HepG2 (cell line): ENCODE measurements at regions of chr15 and their contacts with region 1.

Region 1: GRCh38 chr15:89874926-89875564 is 18.7 kb downstream of the AP3S2 start:
- DNase-seq: peak; percentile 46
- ATAC-seq: peak; percentile 98
- H3K4me3 ChIP-seq: no peak overlapping the region
- H3K27ac ChIP-seq: no peak overlapping the region
- H3K4me1 ChIP-seq: peaks cover 6% of the 10 kb centered on the region; the same call in 1 of the 2 replicates
- H3K27me3 ChIP-seq: no peaks in the 10 kb centered on the region
- CTCF ChIP-seq: peak; percentile 91
- EP300 ChIP-seq: no peak
- POLR2A ChIP-seq: no peak
- RAD21 ChIP-seq: peak; percentile 92

Region 2: DNA sequence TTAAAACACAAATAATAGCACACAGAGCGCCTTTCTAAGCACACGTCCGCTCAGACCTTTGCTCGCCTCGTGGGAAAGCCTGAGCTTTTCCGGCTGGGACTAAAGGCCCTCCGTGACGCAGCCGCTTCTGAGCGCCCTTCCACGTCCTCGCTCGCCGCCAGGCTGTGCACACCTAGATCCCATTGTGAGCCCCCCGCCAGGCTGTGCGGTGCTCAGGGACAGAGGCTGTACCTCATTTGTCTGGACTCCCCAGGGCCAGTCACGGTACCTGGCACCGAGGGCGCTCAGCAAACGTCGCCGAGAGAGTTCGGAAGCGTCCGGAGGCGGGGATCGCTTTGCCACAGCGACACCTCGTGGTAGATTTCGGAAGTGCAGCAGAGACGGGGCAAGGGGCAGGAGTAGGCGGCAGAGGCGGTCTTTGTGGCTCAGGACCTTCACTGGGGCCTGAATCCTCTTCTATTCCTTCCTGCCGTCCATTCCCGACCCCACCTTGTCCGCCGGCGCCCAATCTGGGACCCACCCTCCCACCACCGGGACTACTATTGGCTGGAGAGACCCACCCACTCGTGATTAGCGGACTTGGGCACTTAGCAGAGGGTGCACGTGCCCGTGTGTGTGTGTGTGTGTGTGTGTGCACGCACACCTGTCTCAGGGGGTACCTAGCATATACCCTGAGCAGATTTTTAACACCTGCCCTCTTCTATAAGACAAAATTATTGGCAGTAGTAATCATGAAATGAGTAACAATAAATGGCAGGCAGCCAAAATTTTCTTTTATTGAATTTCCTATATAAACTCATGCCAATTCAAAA is 444.3 kb before region 1 on chr15:
- CTCF ChIA-PET with region 1: no interaction called
- POLR2A ChIA-PET with region 1: no interaction called
- in situ Hi-C with region 1: no loop called
- intact Hi-C with region 1: no loop called
- DNase-seq: peak; percentile 49
- ATAC-seq: peak; percentile 96
- H3K4me3 ChIP-seq: peak overlapping the region; percentile 32 to 73 (median 49); a peak in 5 of 6 replicates
- H3K27ac ChIP-seq: no peak overlapping the region
- H3K4me1 ChIP-seq: peaks cover 8% of the 10 kb centered on the region; the same call in 1 of the 2 replicates
- H3K27me3 ChIP-seq: peaks cover 0 to 16% of the 10 kb centered on the region in 2 experiments; a peak in 1 of 5 replicates
- CTCF ChIP-seq: peak; percentile 99
- EP300 ChIP-seq: no peak
- POLR2A ChIP-seq: no peak
- RAD21 ChIP-seq: peak; percentile 88

Region 3: GRCh38 chr15:89740137-89740536 is 134.9 kb before region 1 on chr15:
- CTCF ChIA-PET with region 1: interaction called, 16 read pairs
- POLR2A ChIA-PET with region 1: no interaction called
- in situ Hi-C with region 1: no loop called
- intact Hi-C with region 1: loop called (anchors 1 kb)
- DNase-seq: peak; percentile 72
- ATAC-seq: peak; percentile 88
- H3K4me3 ChIP-seq: no peak overlapping the region
- H3K27ac ChIP-seq: no peak overlapping the region
- H3K4me1 ChIP-seq: no peaks in the 10 kb centered on the region
- H3K27me3 ChIP-seq: peaks cover 2 to 39% of the 10 kb centered on the region in 2 experiments; a peak in 4 of 5 replicates
- CTCF ChIP-seq: peak; percentile 92
- EP300 ChIP-seq: no peak
- POLR2A ChIP-seq: no peak
- RAD21 ChIP-seq: peak; percentile 84

Region 4: GRCh38 chr15:89754361-89755140 is 120.5 kb before region 1 on chr15:
- CTCF ChIA-PET with region 1: interaction called, 4 read pairs
- POLR2A ChIA-PET with region 1: no interaction called
- in situ Hi-C with region 1: loop called (anchors 5 kb)
- intact Hi-C with region 1: no loop called
- DNase-seq: no peak
- ATAC-seq: no peak
- H3K4me3 ChIP-seq: no peak overlapping the region
- H3K27ac ChIP-seq: no peak overlapping the region
- H3K4me1 ChIP-seq: peaks cover 42% of the 10 kb centered on the region
- H3K27me3 ChIP-seq: peaks cover 13 to 39% of the 10 kb centered on the region in 2 experiments
- CTCF ChIP-seq: no peak
- EP300 ChIP-seq: no peak
- POLR2A ChIP-seq: no peak
- RAD21 ChIP-seq: no peak

Region 5: DNA sequence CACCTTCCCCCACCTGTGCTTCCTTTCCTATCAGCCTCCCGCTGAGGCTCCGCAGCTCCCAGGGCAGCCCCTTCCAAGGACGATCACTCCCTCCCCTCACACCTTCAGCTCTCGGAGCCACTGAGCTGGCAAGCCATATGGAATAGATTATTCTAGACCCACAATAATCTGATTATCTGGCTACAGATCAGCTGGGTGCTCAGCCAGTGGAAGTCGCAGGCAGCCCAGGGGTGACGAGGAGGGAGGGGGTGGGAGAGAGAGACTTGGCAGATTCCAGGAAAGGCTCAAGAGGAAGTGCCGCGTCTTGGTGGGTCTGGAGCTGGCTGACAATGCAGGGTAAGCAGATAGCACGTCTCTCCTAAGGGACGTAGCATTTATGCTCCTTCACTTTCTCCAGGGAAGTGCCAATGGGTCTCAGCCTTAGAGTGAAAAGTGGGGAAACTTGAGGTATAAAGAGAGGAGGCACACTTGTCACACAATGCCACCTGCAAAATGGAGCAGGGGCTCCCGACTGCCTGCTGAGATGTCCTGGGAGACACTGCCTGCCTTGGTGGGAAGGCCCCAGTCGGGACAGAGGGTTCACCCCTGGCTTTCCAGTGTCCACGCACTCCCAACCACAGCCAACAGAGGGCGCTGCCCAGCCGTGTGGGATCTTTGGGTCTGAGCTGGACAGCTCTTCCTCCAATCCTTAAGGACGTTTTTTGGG is 114.6 kb before region 1 on chr15:
- CTCF ChIA-PET with region 1: interaction called, 44 read pairs
- POLR2A ChIA-PET with region 1: interaction called, 8 read pairs
- in situ Hi-C with region 1: loop called (anchors 5 kb)
- intact Hi-C with region 1: loop called (anchors 1 kb)
- DNase-seq: peak; percentile 61
- ATAC-seq: peak; percentile 91
- H3K4me3 ChIP-seq: peak overlapping the region in 1 of 3 experiments; percentile 53; a peak in 1 of 6 replicates
- H3K27ac ChIP-seq: no peak overlapping the region
- H3K4me1 ChIP-seq: peaks cover 54% of the 10 kb centered on the region
- H3K27me3 ChIP-seq: peaks cover 7 to 18% of the 10 kb centered on the region in 2 experiments
- CTCF ChIP-seq: peak; percentile 98
- EP300 ChIP-seq: no peak
- POLR2A ChIP-seq: no peak
- RAD21 ChIP-seq: peak; percentile 96

Region 6: GRCh38 chr15:89806559-89807550 is 68.2 kb before region 1 on chr15:
- CTCF ChIA-PET with region 1: no interaction called
- POLR2A ChIA-PET with region 1: interaction called, 11 read pairs
- in situ Hi-C with region 1: no loop called
- intact Hi-C with region 1: loop called (anchors 5 kb)
- DNase-seq: peak; percentile 92
- ATAC-seq: peak; percentile 94
- H3K4me3 ChIP-seq: peak overlapping the region in 1 of 3 experiments; percentile 52; a peak in 2 of 6 replicates
- H3K27ac ChIP-seq: peak overlapping the region; percentile 86
- H3K4me1 ChIP-seq: peaks cover 78% of the 10 kb centered on the region
- H3K27me3 ChIP-seq: no peaks in the 10 kb centered on the region
- CTCF ChIP-seq: peak; percentile 37
- EP300 ChIP-seq: peak in 1 of 2 experiments; percentile 61; a peak in 1 of 4 replicates
- POLR2A ChIP-seq: peak in 1 of 2 experiments; percentile 62; a peak in 2 of 4 replicates
- RAD21 ChIP-seq: peak; percentile 53; the same call in 1 of the 2 replicates

Region 7: GRCh38 chr15:89812011-89812835 is 62.8 kb before region 1 on chr15:
- CTCF ChIA-PET with region 1: no interaction called
- POLR2A ChIA-PET with region 1: interaction called, 11 read pairs
- in situ Hi-C with region 1: no loop called
- intact Hi-C with region 1: loop called (anchors 5 kb)
- DNase-seq: peak; percentile 56
- ATAC-seq: peak; percentile 64
- H3K4me3 ChIP-seq: peak overlapping the region; percentile 78 to 94 (median 88); a peak in 4 of 6 replicates
- H3K27ac ChIP-seq: peak overlapping the region; percentile 91
- H3K4me1 ChIP-seq: peaks cover 85% of the 10 kb centered on the region
- H3K27me3 ChIP-seq: no peaks in the 10 kb centered on the region; a peak in 1 of 5 replicates
- CTCF ChIP-seq: no peak
- EP300 ChIP-seq: no peak
- POLR2A ChIP-seq: peak in 1 of 2 experiments; percentile 55; a peak in 1 of 4 replicates
- RAD21 ChIP-seq: no peak